Activated CD4-positive, alpha-beta T cell treated with anti-CD3 and anti-CD28 coated beads for 36 hours (primary cell): ENCODE measurements at regions of chr19 and their contacts with region 1.

Region 1: DNA sequence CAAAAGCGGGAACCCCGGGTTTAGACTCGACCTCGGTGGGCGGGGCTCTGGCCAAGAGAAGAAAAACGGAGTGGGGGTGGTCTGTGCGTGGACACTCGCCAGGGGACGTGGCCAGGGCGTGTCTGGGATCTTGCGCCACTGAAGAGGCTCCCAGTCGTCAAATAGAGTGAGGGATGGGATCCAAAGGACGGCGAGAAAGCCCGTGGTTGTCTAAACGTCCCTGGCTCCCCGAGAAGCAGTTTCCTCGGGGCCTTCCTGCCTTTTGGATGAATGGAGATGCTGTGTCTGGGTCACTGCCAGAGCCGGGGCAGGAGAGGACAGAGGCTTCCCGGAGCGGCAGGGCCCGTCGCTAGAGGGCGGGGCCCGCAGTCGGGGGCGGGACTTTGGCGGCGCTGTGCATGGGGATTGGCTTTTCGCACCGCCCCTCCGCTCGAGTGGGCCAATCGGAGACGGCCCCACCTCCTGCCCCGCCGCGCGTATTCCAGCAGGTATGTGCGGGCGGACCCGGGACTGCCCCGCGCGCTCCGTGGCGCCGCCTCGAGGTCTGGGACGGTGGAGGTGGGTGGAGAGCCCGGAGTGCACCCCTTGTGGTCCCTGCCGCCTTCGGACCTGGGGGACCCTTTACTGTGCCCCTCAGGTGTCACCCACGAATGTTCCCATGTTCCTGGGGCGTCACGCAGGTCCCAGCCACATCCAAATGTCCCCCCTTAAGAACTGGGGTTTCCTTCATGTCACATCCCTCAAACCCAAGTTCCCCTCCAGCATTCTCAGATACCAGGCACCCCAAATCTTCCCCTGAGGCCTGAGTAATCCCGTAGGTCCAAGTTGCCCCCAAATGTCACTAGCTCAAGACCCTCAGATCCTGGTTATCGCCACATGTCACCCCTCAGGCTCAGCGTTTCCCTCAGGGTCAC is 38.3 kb downstream of the ZSWIM4 start:
- DNase-seq: peak; percentile 97
- ATAC-seq: peak; percentile 90
- H3K4me3 Mint-ChIP-seq: peak overlapping the region; percentile 65
- H3K27ac Mint-ChIP-seq: peak overlapping the region; percentile 91
- H3K4me1 Mint-ChIP-seq: peaks cover 37% of the 10 kb centered on the region
- H3K27me3 Mint-ChIP-seq: no peaks in the 10 kb centered on the region

Region 2: GRCh38 chr19:13668964-13669363 is 164.6 kb before region 1 on chr19:
- CTCF ChIA-PET with region 1: no interaction called
- POLR2A ChIA-PET with region 1: interaction called, 11 read pairs
- intact Hi-C with region 1: no loop called
- DNase-seq: no peak
- ATAC-seq: no peak
- H3K4me3 Mint-ChIP-seq: no peak overlapping the region
- H3K27ac Mint-ChIP-seq: no peak overlapping the region
- H3K4me1 Mint-ChIP-seq: no peaks in the 10 kb centered on the region
- H3K27me3 Mint-ChIP-seq: peaks cover 2% of the 10 kb centered on the region

Region 3: DNA sequence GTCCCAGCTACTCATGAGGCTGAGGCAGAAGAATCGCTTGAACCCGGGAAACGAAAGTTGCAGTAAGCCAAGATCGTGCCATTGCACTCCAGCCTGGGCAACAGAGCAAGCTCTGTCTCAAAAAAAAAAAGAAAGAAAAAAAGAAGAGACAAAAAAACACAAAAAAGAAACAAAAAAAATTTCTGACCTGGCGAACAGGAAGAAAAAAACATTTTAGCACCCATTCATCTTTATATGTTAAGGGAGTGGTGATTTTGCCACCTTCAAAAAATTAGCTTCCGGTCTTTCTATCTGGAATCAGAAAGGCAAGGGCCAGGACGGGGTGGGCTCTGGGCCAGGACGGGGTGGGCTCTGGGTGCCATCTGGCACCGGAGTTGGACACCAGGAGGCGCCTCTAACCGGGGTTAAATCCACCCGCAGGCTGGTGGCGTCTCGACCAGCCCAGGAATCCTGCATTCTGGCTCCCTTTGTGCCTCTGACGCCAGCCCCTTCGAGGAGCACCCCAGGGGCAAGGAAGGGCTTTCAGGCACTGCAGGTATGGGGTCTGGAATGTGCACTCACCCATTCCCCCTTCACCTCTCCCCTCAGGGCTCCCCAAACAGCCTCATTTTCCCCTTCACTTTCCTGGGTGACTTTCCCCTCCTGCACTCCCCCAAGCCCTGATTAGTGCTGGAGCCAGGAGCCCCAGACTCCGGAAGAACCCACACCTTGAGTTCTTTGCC is 48.7 kb before region 1 on chr19:
- CTCF ChIA-PET with region 1: interaction called, 3 read pairs
- POLR2A ChIA-PET with region 1: no interaction called
- intact Hi-C with region 1: loop called in 1 of 2 experiments (anchors 2 kb)
- DNase-seq: peak; percentile 88
- ATAC-seq: peak; percentile 84
- H3K4me3 Mint-ChIP-seq: peak overlapping the region; percentile 31
- H3K27ac Mint-ChIP-seq: peak overlapping the region; percentile 66
- H3K4me1 Mint-ChIP-seq: peaks cover 45% of the 10 kb centered on the region
- H3K27me3 Mint-ChIP-seq: no peaks in the 10 kb centered on the region

Region 4: DNA sequence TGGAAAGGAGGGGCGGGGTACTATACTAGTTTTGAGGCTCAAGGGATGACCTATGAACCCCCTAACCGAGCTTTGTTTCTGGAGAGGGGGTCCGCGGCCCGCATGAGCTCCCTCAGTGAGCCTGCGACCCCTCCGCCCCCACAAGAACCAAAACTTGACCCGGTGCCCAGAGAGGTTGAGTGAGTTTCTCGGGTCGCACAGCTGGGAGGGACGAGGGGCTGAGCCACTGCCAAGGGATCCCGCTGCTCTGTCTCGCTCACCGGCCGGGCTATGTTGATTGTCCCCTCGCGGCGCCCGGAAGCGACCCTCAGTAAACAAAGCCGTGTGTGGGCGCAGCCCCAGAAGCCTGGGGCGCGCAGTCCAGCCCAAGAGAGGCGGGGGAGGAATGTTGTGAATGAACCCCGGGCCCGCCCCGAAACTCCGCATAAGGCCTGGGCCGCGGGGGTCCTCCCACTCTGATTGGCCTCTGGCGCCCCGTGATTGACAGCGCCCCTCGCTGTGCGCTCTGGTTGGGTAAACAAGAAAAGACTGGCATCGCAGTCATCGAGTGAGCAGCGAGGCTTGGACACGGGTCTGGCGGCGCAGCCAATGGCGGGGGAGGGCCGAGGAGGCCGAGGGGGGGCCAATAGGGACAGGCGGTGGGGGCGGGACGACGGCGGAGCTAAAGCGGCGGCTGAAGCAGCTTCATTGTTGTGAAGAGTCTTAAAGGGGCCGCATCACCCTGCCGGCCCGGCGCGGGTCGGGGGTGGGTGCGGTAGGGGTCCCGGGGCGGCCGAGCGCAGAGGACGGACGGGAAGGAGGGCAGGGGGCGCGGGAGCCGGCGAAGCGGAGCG is 38.6 kb before region 1 on chr19 and contains the start of gene ZSWIM4:
- CTCF ChIA-PET with region 1: interaction called, 5 read pairs
- POLR2A ChIA-PET with region 1: no interaction called
- intact Hi-C with region 1: loop called (anchors 1 to 5 kb)
- DNase-seq: peak; percentile 98
- ATAC-seq: peak; percentile 99
- H3K4me3 Mint-ChIP-seq: peak within 1 kb of the TSS; percentile 96
- H3K27ac Mint-ChIP-seq: peak within 1 kb of the TSS; percentile 94
- H3K4me1 Mint-ChIP-seq: peaks cover 24% of the 10 kb centered on the region
- H3K27me3 Mint-ChIP-seq: no peaks in the 10 kb centered on the region
- total RNA-seq, gene ZSWIM4: 5.6 to 5.8 TPM